ENCODE measurements at regions of chr15 and their contacts with region 1.

Region 1: DNA sequence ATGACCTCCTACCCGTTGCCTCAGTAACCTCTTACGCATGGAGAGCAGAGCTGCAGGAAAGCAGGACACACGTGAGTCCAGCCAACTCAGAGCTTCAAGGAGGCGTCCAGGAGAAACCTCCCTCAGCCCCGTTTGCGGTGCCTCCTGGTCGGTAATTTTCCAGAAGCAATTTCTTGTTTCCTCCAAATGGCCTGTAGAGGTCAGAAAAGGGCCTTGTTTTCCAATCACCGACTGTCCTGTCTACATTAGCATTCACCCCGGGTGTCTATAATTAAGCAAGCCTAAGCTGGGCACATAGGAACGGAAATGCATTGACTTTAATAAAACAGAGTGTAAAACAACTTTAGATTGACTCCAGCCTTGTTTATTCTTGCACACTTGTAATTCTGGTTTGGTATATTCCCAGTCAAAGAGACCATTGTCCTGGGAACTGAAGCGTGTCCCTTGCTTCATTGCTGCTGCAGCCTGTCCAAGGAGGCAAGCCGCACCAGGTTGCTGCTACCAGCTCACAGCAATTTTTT is 836.2 kb downstream of the AGBL1 start:
- DNase-seq: peak; percentile 37 to 48
- H3K4me3 ChIP-seq: no peak overlapping the region
- H3K4me3 Mint-ChIP-seq: no peak overlapping the region
- H3K27ac Mint-ChIP-seq: no peak overlapping the region
- H3K4me1 ChIP-seq: no peaks in the 10 kb centered on the region
- H3K4me1 Mint-ChIP-seq: no peaks in the 10 kb centered on the region
- H3K27me3 ChIP-seq: no peaks in the 10 kb centered on the region; the same call in none of the 2 replicates
- H3K27me3 Mint-ChIP-seq: peaks cover 15% of the 10 kb centered on the region
- CTCF ChIP-seq: peak; percentile 37 to 58

Region 2: DNA sequence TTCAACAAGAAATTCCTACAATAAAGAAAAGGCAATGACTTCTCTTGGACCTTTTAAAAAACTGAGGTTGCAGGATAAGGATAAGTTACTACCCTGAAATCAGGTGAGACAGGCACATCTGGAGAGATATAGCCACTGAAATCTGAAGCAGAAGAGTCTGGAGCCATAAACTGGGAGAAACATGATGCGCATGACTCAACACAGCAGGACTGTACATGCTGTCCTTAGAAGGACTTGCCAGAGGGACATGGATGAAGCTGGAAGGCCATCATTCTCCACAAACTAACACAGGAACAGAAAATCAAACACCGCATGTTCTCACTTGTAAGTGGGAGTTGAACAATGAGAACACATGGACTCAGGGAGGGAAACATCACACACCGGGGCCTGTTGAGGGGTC is 184.0 kb after region 1 on chr15:
- CTCF ChIA-PET with region 1: no interaction called
- POLR2A ChIA-PET with region 1: no interaction called
- intact Hi-C with region 1: no loop called
- DNase-seq: no peak
- H3K4me3 ChIP-seq: no peak overlapping the region
- H3K4me3 Mint-ChIP-seq: no peak overlapping the region
- H3K27ac Mint-ChIP-seq: no peak overlapping the region
- H3K4me1 ChIP-seq: no peaks in the 10 kb centered on the region
- H3K4me1 Mint-ChIP-seq: no peaks in the 10 kb centered on the region
- H3K27me3 ChIP-seq: no peaks in the 10 kb centered on the region
- H3K27me3 Mint-ChIP-seq: no peaks in the 10 kb centered on the region
- CTCF ChIP-seq: no peak

Region 3: DNA sequence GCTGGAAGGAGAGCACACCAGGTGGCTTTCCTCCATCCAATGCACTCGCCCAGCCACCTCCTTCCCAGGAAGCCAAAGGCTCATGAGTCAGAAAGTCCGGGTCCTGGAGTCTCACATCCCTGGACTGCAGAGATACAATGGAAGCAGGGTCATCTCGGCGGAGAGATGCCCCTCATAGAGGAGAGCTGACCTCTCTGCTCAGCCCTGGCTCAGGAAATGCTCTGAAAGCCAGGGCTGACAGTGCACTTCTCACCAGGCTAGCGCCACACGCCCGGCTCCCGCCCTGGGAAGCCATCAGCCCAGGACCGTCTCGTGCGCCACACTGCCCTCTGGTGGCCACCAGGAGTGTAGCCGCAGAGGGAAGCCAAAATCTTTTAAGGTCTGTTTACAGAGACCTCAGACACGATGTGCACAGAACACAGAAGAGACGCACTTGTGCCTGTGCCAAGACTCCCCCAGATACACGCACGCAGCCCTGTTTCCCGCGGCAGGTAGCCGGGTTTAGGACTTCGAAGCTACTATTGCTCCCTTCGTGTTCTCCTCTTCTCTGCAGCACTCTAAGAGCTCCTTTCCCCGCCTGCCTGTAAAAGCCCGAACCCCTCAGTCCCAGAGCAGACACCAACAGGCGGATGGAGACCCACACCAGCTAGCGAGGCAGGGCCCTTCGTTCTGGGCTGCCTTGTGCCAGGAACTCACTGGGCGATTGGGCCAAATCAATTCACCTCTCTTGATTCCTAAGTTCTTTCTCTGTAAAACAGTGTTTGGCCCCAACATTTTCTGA is 1331.0 kb after region 1 on chr15:
- CTCF ChIA-PET with region 1: no interaction called
- POLR2A ChIA-PET with region 1: no interaction called
- intact Hi-C with region 1: loop called (anchors 2 kb)
- DNase-seq: peak; percentile 66 to 79
- H3K4me3 ChIP-seq: no peak overlapping the region
- H3K4me3 Mint-ChIP-seq: no peak overlapping the region
- H3K27ac Mint-ChIP-seq: no peak overlapping the region
- H3K4me1 ChIP-seq: no peaks in the 10 kb centered on the region
- H3K4me1 Mint-ChIP-seq: no peaks in the 10 kb centered on the region
- H3K27me3 ChIP-seq: no peaks in the 10 kb centered on the region
- H3K27me3 Mint-ChIP-seq: peaks cover 10% of the 10 kb centered on the region
- CTCF ChIP-seq: peak; percentile 86 to 87

Measured in Caco-2 (cell line).